Calu3 (cell line): ENCODE measurements at regions of chr11 and their contacts with region 1.

Region 1: GRCh38 chr11:20127671-20128527 is 32.4 kb downstream of the DBX1 start:
- DNase-seq: peak; percentile 86
- H3K4me3 Mint-ChIP-seq: no peak overlapping the region
- H3K27ac Mint-ChIP-seq: no peak overlapping the region
- H3K4me1 Mint-ChIP-seq: peaks cover 9% of the 10 kb centered on the region
- H3K27me3 Mint-ChIP-seq: peaks cover 2% of the 10 kb centered on the region
- CTCF ChIP-seq: peak; percentile 87

Region 2: GRCh38 chr11:19432370-19433061 is 695.4 kb before region 1 on chr11:
- CTCF ChIA-PET with region 1: no interaction called
- intact Hi-C with region 1: no loop called
- DNase-seq: no peak
- H3K4me3 Mint-ChIP-seq: no peak overlapping the region
- H3K27ac Mint-ChIP-seq: no peak overlapping the region
- H3K4me1 Mint-ChIP-seq: peaks cover 25% of the 10 kb centered on the region
- H3K27me3 Mint-ChIP-seq: peaks cover 99% of the 10 kb centered on the region
- CTCF ChIP-seq: no peak

Region 3: DNA sequence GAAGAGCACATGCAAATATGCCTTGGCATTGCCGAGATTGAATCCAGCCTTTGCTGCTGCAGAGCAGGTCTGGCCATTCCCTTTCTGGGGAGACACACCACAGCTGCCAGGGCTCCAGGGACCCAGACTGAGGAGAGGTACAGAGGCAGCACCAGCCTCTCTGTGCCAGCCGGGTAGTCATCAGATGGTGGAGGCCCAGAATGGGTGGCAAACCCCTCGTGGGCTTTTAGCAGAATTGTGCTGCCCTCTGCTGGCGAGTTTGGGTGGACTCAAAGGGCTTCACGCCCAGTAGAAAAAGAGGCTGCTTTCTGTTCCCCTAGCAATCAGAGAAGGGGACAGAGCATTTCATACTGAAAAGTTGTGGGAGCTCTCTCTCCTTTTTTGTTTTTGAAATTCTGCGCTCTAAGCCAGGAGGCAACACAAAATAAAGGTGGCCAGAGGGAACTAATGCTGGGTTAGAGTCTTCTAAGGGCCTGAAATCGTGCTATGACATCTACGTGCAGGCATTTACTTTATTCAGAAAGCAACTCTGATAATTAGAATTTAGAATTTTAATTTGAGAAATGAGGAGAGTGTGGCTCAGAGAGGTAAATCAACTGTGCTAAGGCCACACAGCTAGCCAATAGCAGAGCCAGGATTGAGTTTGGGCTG is 574.1 kb before region 1 on chr11:
- CTCF ChIA-PET with region 1: no interaction called
- intact Hi-C with region 1: loop called (anchors 10 kb)
- DNase-seq: peak; percentile 86
- H3K4me3 Mint-ChIP-seq: no peak overlapping the region
- H3K27ac Mint-ChIP-seq: no peak overlapping the region
- H3K4me1 Mint-ChIP-seq: peaks cover 8% of the 10 kb centered on the region
- H3K27me3 Mint-ChIP-seq: peaks cover 70% of the 10 kb centered on the region
- CTCF ChIP-seq: peak; percentile 78

Region 4: DNA sequence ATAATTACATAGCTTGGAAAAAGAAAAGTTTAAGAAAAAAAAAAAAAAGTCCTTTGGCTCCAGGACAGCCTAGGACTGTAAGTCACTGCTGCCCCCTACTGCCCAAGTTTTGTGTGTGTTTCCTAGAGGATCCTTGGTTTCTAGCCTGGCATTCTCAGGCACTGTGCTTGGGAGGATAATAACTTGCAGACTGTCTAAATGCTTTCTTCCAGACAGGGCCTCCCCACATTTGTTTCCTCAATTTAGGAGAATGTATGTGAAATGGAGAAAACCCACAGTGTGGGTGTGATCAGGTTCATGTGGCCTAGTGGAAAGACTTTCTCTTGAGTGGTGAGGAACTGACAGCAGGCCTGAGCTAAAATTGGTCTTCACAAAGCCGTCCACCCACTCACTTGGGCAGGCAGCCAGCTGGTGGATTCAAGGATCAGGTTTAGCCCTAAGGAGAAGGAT is 224.3 kb before region 1 on chr11:
- CTCF ChIA-PET with region 1: interaction called, 8 read pairs
- intact Hi-C with region 1: loop called (anchors 1 kb)
- DNase-seq: peak; percentile 81
- H3K4me3 Mint-ChIP-seq: no peak overlapping the region
- H3K27ac Mint-ChIP-seq: no peak overlapping the region
- H3K4me1 Mint-ChIP-seq: peaks cover 9% of the 10 kb centered on the region
- H3K27me3 Mint-ChIP-seq: no peaks in the 10 kb centered on the region
- CTCF ChIP-seq: peak; percentile 68

Region 5: GRCh38 chr11:19951558-19952115 is 176.3 kb before region 1 on chr11:
- CTCF ChIA-PET with region 1: interaction called, 22 read pairs
- intact Hi-C with region 1: loop called (anchors 1 kb)
- DNase-seq: peak; percentile 44
- H3K4me3 Mint-ChIP-seq: no peak overlapping the region
- H3K27ac Mint-ChIP-seq: no peak overlapping the region
- H3K4me1 Mint-ChIP-seq: peaks cover 38% of the 10 kb centered on the region
- H3K27me3 Mint-ChIP-seq: no peaks in the 10 kb centered on the region
- CTCF ChIP-seq: peak; percentile 24

Region 6: GRCh38 chr11:20197881-20198280 is 70.0 kb after region 1 on chr11:
- CTCF ChIA-PET with region 1: no interaction called
- intact Hi-C with region 1: no loop called
- DNase-seq: no peak
- H3K4me3 Mint-ChIP-seq: no peak overlapping the region
- H3K27ac Mint-ChIP-seq: no peak overlapping the region
- H3K4me1 Mint-ChIP-seq: no peaks in the 10 kb centered on the region
- H3K27me3 Mint-ChIP-seq: peaks cover 22% of the 10 kb centered on the region
- CTCF ChIP-seq: no peak

Region 7: GRCh38 chr11:20238712-20239111 is 110.8 kb after region 1 on chr11:
- CTCF ChIA-PET with region 1: no interaction called
- intact Hi-C with region 1: no loop called
- DNase-seq: peak; percentile 15
- H3K4me3 Mint-ChIP-seq: no peak overlapping the region
- H3K27ac Mint-ChIP-seq: no peak overlapping the region
- H3K4me1 Mint-ChIP-seq: no peaks in the 10 kb centered on the region
- H3K27me3 Mint-ChIP-seq: no peaks in the 10 kb centered on the region
- CTCF ChIP-seq: no peak

Region 8: GRCh38 chr11:20310137-20310536 is 182.2 kb after region 1 on chr11:
- CTCF ChIA-PET with region 1: no interaction called
- intact Hi-C with region 1: no loop called
- DNase-seq: no peak
- H3K4me3 Mint-ChIP-seq: no peak overlapping the region
- H3K27ac Mint-ChIP-seq: no peak overlapping the region
- H3K4me1 Mint-ChIP-seq: no peaks in the 10 kb centered on the region
- H3K27me3 Mint-ChIP-seq: peaks cover 31% of the 10 kb centered on the region
- CTCF ChIP-seq: no peak

Region 9: DNA sequence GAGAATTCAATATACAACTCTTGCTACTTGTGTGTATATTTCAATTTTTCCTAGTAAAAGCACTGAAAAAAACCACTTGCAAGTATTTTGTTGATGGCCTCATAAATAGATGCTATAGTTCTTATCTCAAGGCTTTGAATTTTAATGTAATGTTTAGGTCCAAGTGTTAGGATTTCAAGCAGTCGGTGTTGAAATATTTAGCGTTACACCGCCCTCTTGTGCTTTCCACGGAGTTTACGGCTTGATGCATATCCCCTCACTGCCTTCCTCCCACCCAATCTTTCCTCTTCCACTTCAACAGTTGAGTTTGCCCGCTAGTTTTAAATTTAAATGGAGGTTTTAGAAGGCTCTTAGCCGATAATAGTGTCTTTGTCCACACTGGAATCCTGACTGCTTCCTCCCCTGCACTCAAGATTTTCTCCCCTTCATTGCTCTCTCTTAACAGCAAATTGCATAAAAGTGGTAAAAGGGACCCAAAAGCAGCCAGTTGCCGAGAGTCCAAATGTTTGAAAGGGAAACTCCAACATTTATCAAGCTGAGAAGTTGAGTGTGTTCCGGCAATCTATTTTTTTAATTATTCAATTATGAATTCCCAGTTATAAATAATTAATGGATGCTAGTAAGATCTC is 209.7 kb after region 1 on chr11:
- CTCF ChIA-PET with region 1: no interaction called
- intact Hi-C with region 1: loop called (anchors 5 kb)
- DNase-seq: peak; percentile 16
- H3K4me3 Mint-ChIP-seq: no peak overlapping the region
- H3K27ac Mint-ChIP-seq: no peak overlapping the region
- H3K4me1 Mint-ChIP-seq: no peaks in the 10 kb centered on the region
- H3K27me3 Mint-ChIP-seq: peaks cover 72% of the 10 kb centered on the region
- CTCF ChIP-seq: peak; percentile 12

Region 10: GRCh38 chr11:20609727-20610707 is 482.1 kb after region 1 on chr11:
- CTCF ChIA-PET with region 1: interaction called, 6 read pairs
- intact Hi-C with region 1: loop called (anchors 5 kb)
- DNase-seq: peak; percentile 89
- H3K4me3 Mint-ChIP-seq: peak overlapping the region; percentile 48
- H3K27ac Mint-ChIP-seq: no peak overlapping the region
- H3K4me1 Mint-ChIP-seq: peaks cover 10% of the 10 kb centered on the region
- H3K27me3 Mint-ChIP-seq: peaks cover 97% of the 10 kb centered on the region
- CTCF ChIP-seq: peak; percentile 93